ENCODE measurements at regions of chr12 and their contacts with region 1.

Region 1: GRCh38 chr12:53738406-53739213 is 11.4 kb upstream of the CALCOCO1 start:
- DNase-seq: peak; percentile 64
- ATAC-seq: peak; percentile 84
- H3K4me3 Mint-ChIP-seq: peak overlapping the region; percentile 22
- H3K27ac Mint-ChIP-seq: no peak overlapping the region
- H3K4me1 Mint-ChIP-seq: peaks cover 18% of the 10 kb centered on the region
- H3K27me3 Mint-ChIP-seq: peaks cover 30% of the 10 kb centered on the region

Region 2: GRCh38 chr12:53287741-53288216 is 450.8 kb before region 1 on chr12:
- CTCF ChIA-PET with region 1: no interaction called
- POLR2A ChIA-PET with region 1: no interaction called
- intact Hi-C with region 1: no loop called
- DNase-seq: peak; percentile 79
- ATAC-seq: peak; percentile 78
- H3K4me3 Mint-ChIP-seq: no peak overlapping the region
- H3K27ac Mint-ChIP-seq: no peak overlapping the region
- H3K4me1 Mint-ChIP-seq: peaks cover 15% of the 10 kb centered on the region
- H3K27me3 Mint-ChIP-seq: no peaks in the 10 kb centered on the region

Region 3: GRCh38 chr12:53476769-53477209 is 261.8 kb before region 1 on chr12:
- CTCF ChIA-PET with region 1: no interaction called
- POLR2A ChIA-PET with region 1: no interaction called
- intact Hi-C with region 1: no loop called
- DNase-seq: no peak
- ATAC-seq: peak; percentile 43
- H3K4me3 Mint-ChIP-seq: no peak overlapping the region
- H3K27ac Mint-ChIP-seq: peak overlapping the region; percentile 55
- H3K4me1 Mint-ChIP-seq: peaks cover 45% of the 10 kb centered on the region
- H3K27me3 Mint-ChIP-seq: no peaks in the 10 kb centered on the region

Region 4: DNA sequence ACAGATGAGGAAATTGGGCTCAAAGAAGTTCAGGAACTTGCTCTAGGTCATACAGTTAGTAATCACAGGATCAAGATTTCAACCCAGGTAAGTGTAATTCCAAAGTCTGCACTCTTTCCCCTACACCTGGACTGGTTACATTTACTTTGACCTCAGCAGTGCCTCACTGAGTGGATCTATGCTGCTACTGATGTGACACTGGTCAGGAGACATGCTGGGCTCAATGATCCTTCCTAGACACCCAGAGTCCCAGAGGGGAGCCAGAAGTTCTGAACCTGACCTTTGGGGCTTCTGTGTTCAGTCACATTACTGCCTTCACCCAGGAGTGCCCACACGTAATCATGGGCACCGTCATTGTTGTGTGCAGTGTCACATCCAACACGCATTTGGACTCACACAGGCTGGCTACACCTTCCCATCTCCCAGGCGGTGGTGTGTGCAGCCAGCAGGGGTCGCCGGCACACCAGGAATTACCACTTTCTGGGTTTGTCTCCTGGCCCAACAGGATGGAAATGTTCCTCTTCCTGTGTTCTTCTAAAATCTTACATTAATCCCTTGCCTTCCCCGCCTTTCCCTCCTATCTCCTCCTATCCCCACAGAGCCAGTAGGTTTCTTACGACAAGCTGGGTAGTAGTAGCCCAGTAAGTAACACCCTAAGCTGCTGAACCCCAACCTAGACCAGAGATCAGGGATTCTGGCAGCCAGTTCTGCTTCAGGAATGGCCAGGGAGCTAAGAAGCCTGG is 36.9 kb before region 1 on chr12:
- CTCF ChIA-PET with region 1: interaction called, 144 read pairs
- POLR2A ChIA-PET with region 1: no interaction called
- intact Hi-C with region 1: loop called (anchors 1 kb)
- DNase-seq: peak; percentile 88
- ATAC-seq: peak; percentile 96
- H3K4me3 Mint-ChIP-seq: no peak overlapping the region
- H3K27ac Mint-ChIP-seq: no peak overlapping the region
- H3K4me1 Mint-ChIP-seq: peaks cover 4% of the 10 kb centered on the region
- H3K27me3 Mint-ChIP-seq: peaks cover 60% of the 10 kb centered on the region

Region 5: DNA sequence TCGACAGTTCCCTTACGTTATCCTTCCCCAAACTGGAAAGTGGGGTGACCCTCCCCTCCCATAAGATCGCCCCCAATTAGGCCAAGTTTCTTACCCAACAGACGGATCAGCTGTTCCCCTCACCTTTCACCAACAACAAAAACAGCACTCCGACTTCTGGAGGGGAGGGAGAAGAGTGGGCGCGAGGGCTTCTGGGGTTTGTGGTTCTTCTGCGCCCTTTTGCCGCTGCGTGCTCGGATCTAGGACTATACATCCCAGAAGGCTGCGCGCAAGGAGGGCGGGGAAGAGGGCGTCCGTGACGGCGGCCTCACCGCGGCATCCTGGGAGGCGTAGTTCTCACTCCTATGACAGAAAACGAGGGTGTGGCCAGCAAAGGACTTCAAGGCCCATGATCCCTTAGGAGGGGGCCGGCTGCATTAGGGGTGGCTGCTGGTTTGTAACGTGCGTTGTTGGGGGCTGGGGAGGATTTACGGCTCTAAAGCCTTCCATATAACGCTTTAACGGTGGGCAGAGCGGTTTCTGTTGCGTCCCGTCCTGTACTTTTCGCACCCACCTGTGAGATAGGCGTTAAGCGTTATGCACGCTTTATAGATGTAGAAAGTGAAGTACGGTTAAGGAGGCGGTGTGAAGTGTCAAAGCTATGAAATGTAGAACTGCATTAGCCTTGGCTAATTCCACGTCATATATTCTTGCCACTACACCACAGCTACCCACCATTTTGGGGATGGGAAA is 11.1 kb before region 1 on chr12 and contains the start of gene CALCOCO1:
- CTCF ChIA-PET with region 1: interaction called, 230 read pairs
- POLR2A ChIA-PET with region 1: interaction called, 3 read pairs
- intact Hi-C with region 1: loop called in 1 of 2 experiments (anchors 1 kb)
- DNase-seq: peak; percentile 99
- ATAC-seq: peak; percentile 99
- H3K4me3 Mint-ChIP-seq: peak within 1 kb of the TSS; percentile 80
- H3K27ac Mint-ChIP-seq: peak within 1 kb of the TSS; percentile 73
- H3K4me1 Mint-ChIP-seq: peaks cover 20% of the 10 kb centered on the region
- H3K27me3 Mint-ChIP-seq: no peaks in the 10 kb centered on the region
- total RNA-seq, gene CALCOCO1: 17.1 to 20.4 TPM

Region 6: GRCh38 chr12:53811606-53812005 is 73.0 kb after region 1 on chr12:
- CTCF ChIA-PET with region 1: no interaction called
- POLR2A ChIA-PET with region 1: no interaction called
- intact Hi-C with region 1: no loop called
- DNase-seq: no peak
- ATAC-seq: no peak
- H3K4me3 Mint-ChIP-seq: no peak overlapping the region
- H3K27ac Mint-ChIP-seq: no peak overlapping the region
- H3K4me1 Mint-ChIP-seq: no peaks in the 10 kb centered on the region
- H3K27me3 Mint-ChIP-seq: peaks cover 15% of the 10 kb centered on the region

Region 7: GRCh38 chr12:54060975-54061778 is 322.6 kb after region 1 on chr12:
- CTCF ChIA-PET with region 1: no interaction called
- POLR2A ChIA-PET with region 1: no interaction called
- intact Hi-C with region 1: no loop called
- DNase-seq: no peak
- ATAC-seq: no peak
- H3K4me3 Mint-ChIP-seq: no peak overlapping the region
- H3K27ac Mint-ChIP-seq: no peak overlapping the region
- H3K4me1 Mint-ChIP-seq: no peaks in the 10 kb centered on the region
- H3K27me3 Mint-ChIP-seq: peaks cover 69% of the 10 kb centered on the region

Measured in activated CD4-positive, alpha-beta T cell treated with anti-CD3 and anti-CD28 coated beads for 36 hours (primary cell).